PC-3 (cell line): ENCODE measurements at regions of chr10 and their contacts with region 1.

Region 1: DNA sequence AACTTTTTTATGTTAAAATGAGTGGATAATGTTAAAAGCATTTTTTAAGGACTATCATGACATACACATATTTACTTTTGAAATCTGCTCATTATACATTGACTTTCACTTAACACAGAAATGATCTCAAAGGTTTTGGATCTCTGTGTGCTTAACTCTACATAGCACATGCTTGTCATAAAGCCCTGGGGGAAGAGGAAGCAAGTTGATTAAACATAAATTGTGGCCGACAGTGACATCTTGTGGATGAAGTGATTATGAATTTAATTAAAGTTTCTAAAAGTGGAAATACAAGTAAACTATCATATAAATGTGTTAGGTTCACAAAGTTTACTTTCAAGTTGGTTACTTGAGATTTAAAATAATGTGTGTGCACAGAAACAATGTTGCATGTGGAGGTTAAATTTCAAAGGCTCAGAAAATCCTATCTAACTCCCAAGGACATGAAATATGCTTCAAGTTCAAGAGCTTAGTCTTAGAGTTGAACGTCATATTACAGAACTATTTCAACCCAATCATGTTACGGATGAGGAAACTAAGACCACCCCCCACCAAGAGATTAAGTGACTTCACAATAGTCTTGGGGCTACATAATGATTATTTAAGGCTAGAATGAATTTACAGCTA is 1247.7 kb downstream of the GATA3 start:
- DNase-seq: peak; percentile 63
- ATAC-seq: no peak
- H3K4me3 ChIP-seq: no peak overlapping the region
- H3K27ac ChIP-seq: no peak overlapping the region
- H3K4me1 ChIP-seq: no peaks in the 10 kb centered on the region
- H3K27me3 ChIP-seq: peaks cover 11% of the 10 kb centered on the region
- CTCF ChIP-seq: peak; percentile 51

Region 2: DNA sequence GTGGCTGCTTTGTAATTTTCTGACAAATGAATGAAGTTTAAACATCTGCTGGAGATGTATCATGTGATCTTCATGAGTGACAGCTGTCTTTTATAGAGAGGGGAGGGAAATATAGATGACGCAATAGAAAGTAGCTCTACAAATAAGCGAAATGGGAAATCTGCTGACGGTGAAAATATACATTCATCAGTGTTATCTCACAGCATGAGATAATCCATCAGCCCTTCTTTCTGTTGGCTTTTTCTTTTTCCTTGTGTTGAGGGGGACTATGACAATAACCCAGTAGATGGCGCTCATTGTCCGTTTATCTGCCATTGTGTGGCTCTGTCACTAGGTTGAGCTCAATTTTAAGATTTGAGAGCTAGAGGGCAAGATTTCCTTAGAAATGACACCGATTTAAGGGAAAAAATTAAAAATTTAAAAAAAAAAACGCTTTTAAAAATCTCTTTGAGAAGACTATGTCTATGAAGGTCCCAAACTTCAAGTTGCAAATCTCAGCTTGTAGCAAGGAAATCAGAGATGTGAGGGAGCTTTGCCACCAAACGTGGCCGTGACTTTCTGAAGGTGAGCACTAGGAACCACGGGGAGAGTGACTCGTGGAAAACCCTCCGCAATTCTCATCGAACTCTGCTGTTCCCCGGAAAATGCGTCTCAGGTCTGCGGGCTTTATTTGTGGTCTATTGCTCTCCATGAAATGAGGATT is 1776.8 kb before region 1 on chr10:
- CTCF ChIA-PET with region 1: interaction called, 6 read pairs
- POLR2A ChIA-PET with region 1: no interaction called
- intact Hi-C with region 1: loop called (anchors 1 kb)
- DNase-seq: peak; percentile 69
- ATAC-seq: peak; percentile 76
- H3K4me3 ChIP-seq: no peak overlapping the region
- H3K27ac ChIP-seq: no peak overlapping the region
- H3K4me1 ChIP-seq: no peaks in the 10 kb centered on the region
- H3K27me3 ChIP-seq: 0 out of 2 replicates have a peak, but pooled peaks cover 7% of the 10 kb centered on the region
- CTCF ChIP-seq: peak; percentile 72

Region 3: DNA sequence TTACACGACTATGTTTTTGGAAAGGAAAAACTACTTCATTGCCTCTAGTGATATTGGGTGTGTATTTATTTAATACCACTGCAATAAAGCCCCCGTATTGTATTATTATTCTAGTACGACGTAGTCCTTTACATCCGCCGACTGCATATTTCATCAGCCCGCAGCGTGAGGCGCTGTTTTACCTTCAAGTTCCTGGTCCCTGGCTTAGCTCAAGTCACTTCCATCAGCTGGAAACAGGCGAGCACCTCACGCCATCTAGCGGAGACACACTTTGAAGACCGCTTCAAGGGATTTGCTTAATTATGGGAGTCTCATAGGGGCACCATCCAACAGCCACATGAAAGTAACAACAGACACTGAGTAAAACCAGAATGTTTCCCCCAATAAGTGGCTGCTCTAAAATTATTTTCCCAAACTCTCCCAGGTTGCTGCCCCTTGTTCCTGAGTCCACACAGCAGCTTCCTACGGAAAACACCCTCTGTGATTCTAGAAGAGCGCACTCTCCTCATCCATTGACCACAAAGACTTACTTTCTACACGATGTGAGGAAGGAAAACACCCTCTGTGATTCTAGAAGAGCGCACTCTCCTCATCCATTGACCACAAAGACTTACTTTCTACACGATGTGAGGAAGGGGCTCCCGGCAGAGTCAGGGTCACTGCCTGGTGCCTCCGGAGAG is 1614.9 kb before region 1 on chr10:
- CTCF ChIA-PET with region 1: no interaction called
- POLR2A ChIA-PET with region 1: no interaction called
- intact Hi-C with region 1: loop called (anchors 10 kb)
- DNase-seq: peak; percentile 74
- ATAC-seq: peak; percentile 90
- H3K4me3 ChIP-seq: no peak overlapping the region
- H3K27ac ChIP-seq: no peak overlapping the region
- H3K4me1 ChIP-seq: no peaks in the 10 kb centered on the region
- H3K27me3 ChIP-seq: no peaks in the 10 kb centered on the region
- CTCF ChIP-seq: peak; percentile 79

Region 4: DNA sequence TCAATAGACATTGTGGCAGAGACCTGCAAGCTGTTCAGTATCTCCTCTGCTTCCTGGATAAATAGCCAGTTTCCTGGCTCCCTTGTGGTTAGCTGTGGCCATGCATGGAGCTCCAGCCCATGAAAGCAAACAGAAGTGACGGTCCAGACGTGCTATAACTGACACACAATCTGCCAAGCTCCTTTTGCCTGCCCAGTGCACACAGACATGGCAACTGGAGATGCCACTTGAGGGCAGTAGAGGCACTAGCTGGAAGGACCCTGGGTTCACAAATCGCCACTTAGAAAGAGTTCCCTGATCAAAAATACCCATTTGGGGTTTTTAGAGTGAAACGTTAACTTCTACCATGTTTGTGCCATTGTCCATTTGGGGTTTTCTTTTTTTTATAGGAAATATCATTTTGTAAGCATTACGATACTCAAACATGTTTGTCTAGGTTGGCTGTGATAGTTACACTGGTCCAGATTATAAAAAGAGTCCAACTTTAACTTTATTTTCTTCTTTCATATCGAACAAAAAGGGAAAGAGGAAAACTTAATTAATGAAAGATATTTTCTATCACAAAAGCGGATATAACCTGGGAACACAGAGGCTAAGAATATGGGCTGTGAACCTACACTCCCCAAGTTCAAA is 1545.8 kb before region 1 on chr10:
- CTCF ChIA-PET with region 1: no interaction called
- POLR2A ChIA-PET with region 1: no interaction called
- intact Hi-C with region 1: loop called (anchors 1 kb)
- DNase-seq: peak; percentile 25
- ATAC-seq: peak; percentile 65
- H3K4me3 ChIP-seq: no peak overlapping the region
- H3K27ac ChIP-seq: no peak overlapping the region
- H3K4me1 ChIP-seq: no peaks in the 10 kb centered on the region
- H3K27me3 ChIP-seq: no peaks in the 10 kb centered on the region
- CTCF ChIP-seq: peak; percentile 57

Region 5: GRCh38 chr10:9381733-9382532 is 79.7 kb after region 1 on chr10:
- CTCF ChIA-PET with region 1: no interaction called
- POLR2A ChIA-PET with region 1: no interaction called
- intact Hi-C with region 1: no loop called
- DNase-seq: no peak
- ATAC-seq: no peak
- H3K4me3 ChIP-seq: no peak overlapping the region
- H3K27ac ChIP-seq: no peak overlapping the region
- H3K4me1 ChIP-seq: no peaks in the 10 kb centered on the region
- H3K27me3 ChIP-seq: no peaks in the 10 kb centered on the region
- CTCF ChIP-seq: no peak